Thyroid gland (tissue), 4 donors: ENCODE measurements at regions of chr10 and their contacts with region 1.

Region 1: GRCh38 chr10:92573798-92574547 is at the start of gene IDE:
- DNase-seq: peak; percentile 90
- H3K4me3 ChIP-seq: peak within 1 kb of the TSS; percentile 60 to 76 (median 70)
- H3K27ac ChIP-seq: peak within 1 kb of the TSS; percentile 32 to 97 (median 95)
- H3K4me1 ChIP-seq: peaks cover 21 to 22% of the 10 kb centered on the region in 2 donors
- H3K27me3 ChIP-seq: no peaks in the 10 kb centered on the region
- CTCF ChIP-seq: peak in 5 of 6 experiments; percentile 51 to 90 (median 77)
- POLR2A ChIP-seq: peak; percentile 6 to 80
- total RNA-seq, gene IDE: 38.8 to 95.2 (median 46.7) TPM

Region 2: DNA sequence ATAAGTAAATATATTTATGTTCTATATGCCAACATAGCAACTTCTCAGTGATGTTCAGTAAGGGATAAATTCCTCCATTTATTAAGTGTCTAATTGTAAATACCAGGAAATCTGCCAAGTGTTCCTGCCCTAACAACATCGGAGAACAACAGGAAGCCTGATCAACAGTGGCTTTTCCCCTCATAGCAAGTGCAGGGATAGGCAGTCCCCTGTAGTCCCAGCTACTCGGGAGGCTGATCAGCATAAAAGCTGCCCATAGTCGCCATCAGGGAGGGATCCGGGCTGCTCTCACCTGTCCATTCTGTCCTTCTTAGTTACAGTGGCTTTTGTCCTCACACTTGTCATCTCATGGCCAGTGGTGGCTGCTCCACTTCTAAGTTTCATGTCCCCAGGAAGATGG is 141.4 kb before region 1 on chr10:
- intact Hi-C with region 1: no loop called
- DNase-seq: no peak
- H3K4me3 ChIP-seq: no peak overlapping the region
- H3K27ac ChIP-seq: no peak overlapping the region
- H3K4me1 ChIP-seq: no peaks in the 10 kb centered on the region
- H3K27me3 ChIP-seq: no peaks in the 10 kb centered on the region
- CTCF ChIP-seq: no peak
- POLR2A ChIP-seq: no peak

Region 3: DNA sequence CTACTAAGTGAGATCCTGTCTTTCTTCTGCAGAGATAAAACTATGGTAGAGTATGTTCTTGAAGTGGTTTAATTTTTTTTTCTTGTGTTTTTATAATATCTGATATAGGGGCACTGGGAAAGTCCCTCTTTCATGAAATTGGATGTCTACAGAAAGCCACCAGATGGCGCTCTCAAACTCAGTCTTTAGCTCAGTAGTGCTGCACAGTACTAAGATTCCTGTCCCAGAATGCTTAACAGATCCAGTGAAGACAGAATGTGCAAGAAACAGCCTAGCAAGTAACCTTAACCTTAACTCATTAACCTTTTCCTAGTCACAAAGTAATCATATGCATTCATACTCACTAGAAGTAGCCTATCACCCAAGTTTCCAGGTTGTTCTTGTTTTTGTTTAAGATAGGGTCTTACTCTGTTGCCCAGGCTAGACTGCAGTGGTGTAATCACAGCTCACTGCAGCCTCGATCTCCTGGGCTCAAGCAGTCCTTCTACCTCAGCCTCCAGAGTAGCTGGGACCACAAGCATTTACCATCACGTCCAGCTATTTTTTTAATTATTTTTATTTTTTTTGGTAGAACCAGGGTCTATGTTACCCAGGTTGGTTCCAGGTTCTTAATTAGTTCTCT is 56.8 kb before region 1 on chr10:
- intact Hi-C with region 1: loop called (anchors 5 kb)
- DNase-seq: peak; percentile 61 to 64
- H3K4me3 ChIP-seq: no peak overlapping the region
- H3K27ac ChIP-seq: no peak overlapping the region
- H3K4me1 ChIP-seq: no peaks in the 10 kb centered on the region
- H3K27me3 ChIP-seq: no peaks in the 10 kb centered on the region
- CTCF ChIP-seq: peak in 5 of 6 experiments; percentile 45 to 84 (median 71)
- POLR2A ChIP-seq: no peak

Region 4: DNA sequence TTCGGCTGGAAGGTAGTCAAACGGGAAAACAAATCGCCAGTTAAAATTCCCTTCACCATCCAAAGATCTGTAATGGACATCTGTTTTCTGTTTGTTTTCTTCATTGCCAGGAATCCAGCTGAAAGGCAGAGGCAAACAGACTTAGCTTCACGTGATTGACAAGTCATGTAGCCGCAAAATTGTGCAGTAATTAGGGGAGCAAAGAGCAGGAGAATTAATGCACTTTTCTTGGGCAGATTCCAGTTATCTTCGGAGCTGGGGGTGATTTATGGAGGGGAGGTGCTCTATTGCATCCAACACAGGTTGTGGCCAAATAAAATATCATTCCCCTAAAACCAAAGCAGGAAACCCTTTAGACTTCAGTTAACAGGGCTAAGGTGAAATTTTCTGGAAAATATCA is 745.9 kb after region 1 on chr10:
- intact Hi-C with region 1: no loop called
- DNase-seq: no peak
- H3K4me3 ChIP-seq: no peak overlapping the region
- H3K27ac ChIP-seq: no peak overlapping the region
- H3K4me1 ChIP-seq: no peaks in the 10 kb centered on the region
- H3K27me3 ChIP-seq: no peaks in the 10 kb centered on the region
- CTCF ChIP-seq: no peak
- POLR2A ChIP-seq: no peak